ENCODE measurements at regions of chr13 and their contacts with region 1.

Region 1: GRCh38 chr13:45055198-45055901 is 65.0 kb upstream of the GTF2F2 start:
- DNase-seq: peak; percentile 17 to 95
- H3K4me3 ChIP-seq: no peak overlapping the region
- H3K27ac ChIP-seq: peak overlapping the region; percentile 46
- H3K4me1 ChIP-seq: peaks cover 19% of the 10 kb centered on the region
- H3K27me3 ChIP-seq: no peaks in the 10 kb centered on the region
- CTCF ChIP-seq: no peak

Region 2: DNA sequence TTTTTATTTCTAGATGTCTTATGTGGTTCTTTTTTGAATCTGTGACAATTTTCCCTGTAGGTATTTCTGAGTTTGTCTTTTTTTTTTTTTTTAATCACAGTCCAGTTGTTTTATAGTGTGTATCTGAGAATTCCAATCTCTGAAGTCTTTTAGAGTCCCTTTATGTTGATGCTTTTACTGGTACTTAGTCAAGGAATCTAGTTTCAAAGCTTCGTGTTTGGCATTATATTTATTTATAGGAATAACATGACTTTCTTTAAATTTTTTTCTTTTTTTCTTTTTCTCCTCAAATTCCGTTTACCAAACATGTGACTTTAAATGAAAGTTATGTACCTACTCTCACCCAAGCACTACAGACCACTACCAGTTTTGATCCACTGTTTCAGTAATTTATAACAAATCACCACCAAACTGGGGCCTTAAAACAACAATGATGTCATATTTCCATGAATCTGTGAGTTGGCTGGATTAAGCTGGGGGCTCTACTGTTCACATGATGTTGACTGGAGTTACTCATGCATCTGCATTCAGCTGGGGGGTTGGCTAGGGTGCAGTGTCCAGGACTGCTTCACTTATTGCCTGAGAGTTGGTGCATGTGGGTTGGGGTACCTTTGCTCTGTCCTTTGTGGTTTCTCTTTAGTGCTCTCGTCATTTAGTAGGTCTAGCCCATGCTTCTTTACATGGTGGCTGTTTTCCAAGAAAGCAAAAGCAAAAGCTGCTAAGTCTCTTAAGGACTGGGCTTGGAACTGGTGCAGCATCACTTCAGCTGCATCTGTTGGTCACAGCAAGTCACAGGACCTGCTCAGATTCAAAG is 123.2 kb after region 1 on chr13:
- CTCF ChIA-PET with region 1: no interaction called
- POLR2A ChIA-PET with region 1: interaction called, 10 read pairs
- intact Hi-C with region 1: no loop called
- DNase-seq: no peak
- H3K4me3 ChIP-seq: no peak overlapping the region
- H3K27ac ChIP-seq: no peak overlapping the region
- H3K4me1 ChIP-seq: no peaks in the 10 kb centered on the region
- H3K27me3 ChIP-seq: no peaks in the 10 kb centered on the region
- CTCF ChIP-seq: no peak